B cell (primary cell): ENCODE measurements at regions of chr16 and their contacts with region 1.

Region 1: DNA sequence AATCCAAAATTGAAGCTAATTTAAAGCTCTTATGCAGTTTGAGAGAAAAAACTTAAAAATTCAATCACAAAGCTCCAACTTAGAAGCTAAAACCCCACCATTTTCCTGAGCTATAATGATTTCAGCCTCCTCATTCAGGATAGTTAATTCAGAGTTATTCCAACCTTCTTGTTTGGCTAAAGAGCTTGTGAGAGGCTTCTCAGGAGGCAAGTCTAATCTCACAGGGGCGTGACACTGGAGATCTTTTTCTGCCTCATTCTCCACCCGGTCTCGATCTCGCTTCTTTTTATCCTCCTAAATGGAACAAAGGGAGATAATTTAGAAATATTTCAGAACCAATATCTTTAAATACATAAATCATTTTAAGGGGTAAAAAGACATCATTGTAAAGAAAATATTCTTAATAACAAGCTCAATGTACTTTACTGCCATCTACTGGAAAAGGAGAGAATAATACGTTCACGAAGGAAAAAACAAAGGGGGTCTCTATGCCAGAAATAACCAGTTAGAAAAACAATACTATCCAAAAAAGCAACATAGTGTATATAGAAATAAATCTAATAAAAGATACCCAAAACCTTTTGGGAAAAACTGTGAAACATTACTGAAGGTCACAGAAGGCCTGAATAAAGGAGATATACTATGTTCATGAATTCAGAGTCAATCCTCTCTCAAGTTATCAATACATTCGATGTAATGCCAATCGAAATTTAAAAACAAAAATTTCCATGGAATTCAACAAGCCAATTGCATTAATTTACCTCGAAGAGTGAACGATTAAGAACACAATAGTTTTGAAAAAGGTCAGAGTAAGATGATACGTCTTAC is 13.9 kb downstream of the BRD7 start:
- DNase-seq: peak; percentile 49
- ATAC-seq: peak; percentile 28
- H3K4me3 ChIP-seq: no peak overlapping the region
- H3K4me3 Mint-ChIP-seq: no peak overlapping the region
- H3K27ac ChIP-seq: no peak overlapping the region
- H3K27ac Mint-ChIP-seq: no peak overlapping the region
- H3K4me1 ChIP-seq: no peaks in the 10 kb centered on the region
- H3K4me1 Mint-ChIP-seq: peaks cover 10% of the 10 kb centered on the region
- H3K27me3 ChIP-seq: no peaks in the 10 kb centered on the region
- H3K27me3 Mint-ChIP-seq: no peaks in the 10 kb centered on the region
- CTCF ChIP-seq: peak; percentile 88

Region 2: DNA sequence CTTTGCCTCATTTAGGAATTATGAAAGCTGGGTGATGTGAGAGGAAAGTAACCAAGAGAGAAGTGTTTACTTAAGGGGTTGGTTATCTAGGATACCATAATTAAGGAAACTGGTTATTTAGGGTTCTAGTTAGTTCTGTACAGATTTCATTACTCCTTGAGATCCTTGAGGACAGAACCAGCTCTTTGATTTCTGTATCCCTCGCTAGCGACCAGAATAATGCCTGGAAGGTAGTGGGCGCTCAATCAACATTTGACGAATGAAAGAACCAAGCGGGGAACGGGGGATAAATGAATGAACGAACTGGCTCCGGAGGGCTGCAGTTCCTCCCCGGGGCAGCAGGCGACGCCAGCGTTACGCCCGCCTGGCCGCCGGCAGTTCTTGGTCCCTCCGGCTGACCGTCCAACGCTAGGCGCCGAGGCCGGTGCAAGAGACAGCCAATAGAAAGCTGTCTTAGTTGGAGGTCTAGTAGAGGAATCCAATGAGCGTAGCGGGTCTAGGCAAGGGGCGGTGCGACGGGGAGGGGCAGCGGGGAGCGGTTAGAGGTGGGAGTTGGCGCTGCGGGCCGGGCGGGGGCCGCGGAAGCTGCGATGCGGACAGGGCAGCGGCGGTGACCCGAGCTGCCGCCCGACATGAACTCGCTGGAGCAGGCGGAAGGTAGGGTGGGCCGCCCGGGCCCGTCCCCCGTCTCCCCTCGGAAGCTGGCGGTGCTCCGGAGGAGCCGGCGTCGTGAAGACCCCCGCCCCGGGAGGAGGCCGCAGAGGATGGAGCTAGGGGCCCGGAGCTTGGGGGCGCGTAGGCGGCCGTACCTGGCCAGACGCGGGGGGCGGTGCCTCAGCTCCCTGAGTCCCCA is 329.9 kb before region 1 on chr16 and contains the start of gene CNEP1R1:
- CTCF ChIA-PET with region 1: interaction called, 9 read pairs
- POLR2A ChIA-PET with region 1: interaction called, 3 read pairs
- intact Hi-C with region 1: loop called (anchors 1 kb)
- DNase-seq: peak; percentile 98
- ATAC-seq: peak; percentile 94
- H3K4me3 ChIP-seq: peak within 1 kb of the TSS; percentile 87 to 93 (median 92)
- H3K4me3 Mint-ChIP-seq: peak within 1 kb of the TSS; percentile 93
- H3K27ac ChIP-seq: peak within 1 kb of the TSS; percentile 31 to 78
- H3K27ac Mint-ChIP-seq: peak within 1 kb of the TSS; percentile 89
- H3K4me1 ChIP-seq: peaks cover 12 to 14% of the 10 kb centered on the region in 2 donors
- H3K4me1 Mint-ChIP-seq: peaks cover 23% of the 10 kb centered on the region
- H3K27me3 ChIP-seq: no peaks in the 10 kb centered on the region
- H3K27me3 Mint-ChIP-seq: peaks cover 7% of the 10 kb centered on the region
- CTCF ChIP-seq: peak; percentile 100
- total RNA-seq, gene CNEP1R1: 32.9 and 36.9 TPM in 2 replicates

Region 3: DNA sequence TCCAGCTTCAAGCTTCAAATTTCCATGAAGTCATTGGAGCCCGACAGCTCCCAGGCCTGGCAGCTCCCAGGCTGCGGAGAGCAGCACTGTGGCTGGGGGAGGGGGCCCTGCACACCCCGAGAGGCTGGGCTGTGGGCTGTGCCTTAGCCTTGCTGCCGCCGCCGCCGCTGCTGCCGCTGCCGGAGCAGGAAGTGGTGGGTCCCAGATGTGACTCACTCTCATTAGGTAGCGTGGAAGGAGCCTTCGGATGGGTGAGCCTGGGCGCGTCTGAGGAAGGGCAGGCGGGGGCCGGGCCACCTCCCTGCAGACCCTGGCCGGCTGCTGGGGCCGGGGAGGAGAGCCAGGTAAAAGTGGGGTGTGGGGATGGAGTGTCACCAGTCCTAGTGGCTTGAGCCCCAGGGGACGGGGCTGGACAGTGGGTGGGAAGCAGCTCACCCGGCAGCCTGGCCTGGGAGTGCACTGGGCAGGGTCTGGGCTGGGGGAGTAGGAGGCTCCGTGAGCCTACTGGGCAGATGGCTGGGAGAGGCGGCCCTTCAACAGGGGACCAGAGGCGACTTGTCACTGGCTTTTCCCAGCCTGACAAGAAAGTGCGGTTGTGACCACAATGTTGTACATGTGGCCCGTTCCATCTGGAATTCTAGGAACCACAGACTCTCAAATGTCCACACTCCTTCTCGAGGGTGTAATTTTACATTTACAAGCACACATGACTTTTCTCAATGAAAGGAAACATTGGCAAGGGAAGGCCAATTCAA is 88.3 kb before region 1 on chr16 and contains the start of gene ADCY7:
- CTCF ChIA-PET with region 1: interaction called, 46 read pairs
- POLR2A ChIA-PET with region 1: interaction called, 3 read pairs
- intact Hi-C with region 1: loop called (anchors 1 kb)
- DNase-seq: peak; percentile 75
- ATAC-seq: peak; percentile 91
- H3K4me3 ChIP-seq: peak within 1 kb of the TSS; percentile 56 to 68 (median 59)
- H3K4me3 Mint-ChIP-seq: peak within 1 kb of the TSS; percentile 90
- H3K27ac ChIP-seq: peak within 1 kb of the TSS; percentile 43 to 79
- H3K27ac Mint-ChIP-seq: peak within 1 kb of the TSS; percentile 97
- H3K4me1 ChIP-seq: peaks cover 35 to 44% of the 10 kb centered on the region in 2 donors
- H3K4me1 Mint-ChIP-seq: peaks cover 62% of the 10 kb centered on the region
- H3K27me3 ChIP-seq: peaks cover 0 to 3% (median 0%) of the 10 kb centered on the region in 4 experiments
- H3K27me3 Mint-ChIP-seq: no peaks in the 10 kb centered on the region
- CTCF ChIP-seq: no peak
- total RNA-seq, gene ADCY7: 205 and 207 TPM in 2 replicates

Region 4: GRCh38 chr16:50326949-50327402 is 27.9 kb before region 1 on chr16:
- CTCF ChIA-PET with region 1: interaction called, 329 read pairs
- POLR2A ChIA-PET with region 1: interaction called, 3 read pairs
- intact Hi-C with region 1: loop called (anchors 1 kb)
- DNase-seq: peak; percentile 50
- ATAC-seq: peak; percentile 85
- H3K4me3 ChIP-seq: no peak overlapping the region
- H3K4me3 Mint-ChIP-seq: peak overlapping the region; percentile 24
- H3K27ac ChIP-seq: peak overlapping the region; percentile 38 to 63
- H3K27ac Mint-ChIP-seq: peak overlapping the region; percentile 74
- H3K4me1 ChIP-seq: peaks cover 0 to 31% of the 10 kb centered on the region in 2 donors
- H3K4me1 Mint-ChIP-seq: peaks cover 51% of the 10 kb centered on the region
- H3K27me3 ChIP-seq: no peaks in the 10 kb centered on the region
- H3K27me3 Mint-ChIP-seq: no peaks in the 10 kb centered on the region
- CTCF ChIP-seq: peak; percentile 76

Region 5: GRCh38 chr16:50340578-50340977 is 14.3 kb before region 1 on chr16:
- CTCF ChIA-PET with region 1: interaction called, 35 read pairs
- POLR2A ChIA-PET with region 1: no interaction called
- intact Hi-C with region 1: no loop called
- DNase-seq: no peak
- ATAC-seq: no peak
- H3K4me3 ChIP-seq: no peak overlapping the region
- H3K4me3 Mint-ChIP-seq: no peak overlapping the region
- H3K27ac ChIP-seq: no peak overlapping the region
- H3K27ac Mint-ChIP-seq: no peak overlapping the region
- H3K4me1 ChIP-seq: peaks cover 0 to 28% of the 10 kb centered on the region in 2 donors
- H3K4me1 Mint-ChIP-seq: peaks cover 23% of the 10 kb centered on the region
- H3K27me3 ChIP-seq: no peaks in the 10 kb centered on the region
- H3K27me3 Mint-ChIP-seq: no peaks in the 10 kb centered on the region
- CTCF ChIP-seq: no peak

Region 6: GRCh38 chr16:50644729-50645128 is 289.9 kb after region 1 on chr16:
- CTCF ChIA-PET with region 1: interaction called, 12 read pairs
- POLR2A ChIA-PET with region 1: no interaction called
- intact Hi-C with region 1: loop called (anchors 10 kb)
- DNase-seq: peak; percentile 47
- ATAC-seq: peak; percentile 68
- H3K4me3 ChIP-seq: no peak overlapping the region
- H3K4me3 Mint-ChIP-seq: no peak overlapping the region
- H3K27ac ChIP-seq: no peak overlapping the region
- H3K27ac Mint-ChIP-seq: no peak overlapping the region
- H3K4me1 ChIP-seq: no peaks in the 10 kb centered on the region
- H3K4me1 Mint-ChIP-seq: no peaks in the 10 kb centered on the region
- H3K27me3 ChIP-seq: peaks cover 0 to 6% (median 0%) of the 10 kb centered on the region in 4 experiments
- H3K27me3 Mint-ChIP-seq: peaks cover 16% of the 10 kb centered on the region
- CTCF ChIP-seq: peak; percentile 59